B cell (primary cell): ENCODE measurements at regions of chr22 and their contacts with region 1.

Region 1: GRCh38 chr22:41857155-41857859 is 24.4 kb downstream of the SREBF2 start:
- DNase-seq: peak; percentile 75
- ATAC-seq: peak; percentile 25
- H3K4me3 ChIP-seq: no peak overlapping the region
- H3K4me3 Mint-ChIP-seq: peak overlapping the region; percentile 40
- H3K27ac ChIP-seq: peak overlapping the region; percentile 10 to 63
- H3K27ac Mint-ChIP-seq: peak overlapping the region; percentile 80
- H3K4me1 ChIP-seq: peaks cover 52 to 62% of the 10 kb centered on the region in 2 donors
- H3K4me1 Mint-ChIP-seq: peaks cover 67% of the 10 kb centered on the region
- H3K27me3 ChIP-seq: no peaks in the 10 kb centered on the region
- H3K27me3 Mint-ChIP-seq: no peaks in the 10 kb centered on the region
- CTCF ChIP-seq: peak; percentile 78

Region 2: DNA sequence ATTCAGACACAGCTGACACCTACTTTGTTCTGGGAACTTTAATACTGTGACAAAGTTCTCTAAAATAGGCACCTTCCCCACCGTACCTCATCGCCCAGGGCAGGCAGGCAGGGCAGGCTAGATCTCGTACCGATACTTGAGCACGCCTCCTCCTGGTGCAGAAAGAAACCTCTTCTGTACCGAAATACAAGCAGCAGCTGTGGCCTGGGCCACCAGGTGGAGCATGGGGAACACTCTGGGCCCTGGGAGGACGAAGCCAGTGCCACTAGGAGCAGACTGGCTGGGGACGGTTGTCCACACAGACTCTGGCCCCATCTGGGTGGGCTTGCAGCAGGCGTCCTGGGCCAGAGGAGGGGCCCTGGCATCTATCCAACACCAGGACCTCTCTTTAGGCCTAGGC is 280.4 kb before region 1 on chr22:
- CTCF ChIA-PET with region 1: no interaction called
- POLR2A ChIA-PET with region 1: no interaction called
- intact Hi-C with region 1: no loop called
- DNase-seq: peak; percentile 33
- ATAC-seq: peak; percentile 41
- H3K4me3 ChIP-seq: no peak overlapping the region
- H3K4me3 Mint-ChIP-seq: no peak overlapping the region
- H3K27ac ChIP-seq: no peak overlapping the region
- H3K27ac Mint-ChIP-seq: no peak overlapping the region
- H3K4me1 ChIP-seq: no peaks in the 10 kb centered on the region
- H3K4me1 Mint-ChIP-seq: no peaks in the 10 kb centered on the region
- H3K27me3 ChIP-seq: no peaks in the 10 kb centered on the region
- H3K27me3 Mint-ChIP-seq: no peaks in the 10 kb centered on the region
- CTCF ChIP-seq: no peak

Region 3: DNA sequence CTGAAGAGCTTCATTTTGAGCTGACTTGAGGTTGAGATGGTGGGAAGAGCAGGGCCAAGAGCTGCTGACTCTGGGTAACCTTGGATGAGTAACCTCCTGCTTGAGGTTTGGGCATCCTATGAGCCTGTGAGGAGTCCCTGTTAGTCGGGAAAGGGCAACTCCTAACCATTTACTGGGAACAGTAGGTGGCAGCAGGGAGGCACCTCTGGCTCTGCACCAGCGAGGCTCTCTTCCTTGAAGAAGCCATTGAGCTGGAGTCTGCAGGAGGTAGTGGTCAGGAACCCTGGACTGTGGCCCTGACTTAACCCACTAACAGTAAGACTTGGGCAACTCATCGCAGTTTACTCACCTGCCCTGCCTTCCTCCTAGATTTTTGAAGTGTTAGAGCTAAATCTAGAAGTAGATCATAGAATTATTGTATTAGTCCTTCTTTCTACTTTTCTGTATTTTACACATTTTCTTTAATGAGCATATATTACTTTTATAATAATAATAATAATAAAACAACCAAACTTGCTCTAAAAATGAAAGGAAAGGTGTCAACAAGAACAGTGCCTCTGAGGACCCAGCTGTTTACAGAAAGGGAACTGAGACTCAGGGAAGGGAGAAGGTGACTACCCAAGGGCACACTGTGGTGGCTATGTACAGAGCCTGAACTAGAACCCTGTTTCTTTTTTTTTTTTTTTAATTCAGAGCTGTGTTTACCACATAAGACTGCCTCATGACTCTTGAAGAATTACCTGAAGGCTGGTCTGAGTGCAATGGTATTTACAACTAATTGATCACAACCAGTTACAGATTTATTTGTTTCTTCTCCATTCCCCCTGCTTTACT is 110.5 kb before region 1 on chr22:
- CTCF ChIA-PET with region 1: interaction called, 9 read pairs
- POLR2A ChIA-PET with region 1: interaction called, 11 read pairs
- intact Hi-C with region 1: no loop called
- DNase-seq: peak; percentile 73
- ATAC-seq: peak; percentile 96
- H3K4me3 ChIP-seq: peak overlapping the region in 1 of 5 experiments; percentile 26
- H3K4me3 Mint-ChIP-seq: peak overlapping the region; percentile 63
- H3K27ac ChIP-seq: peak overlapping the region; percentile 50 to 62
- H3K27ac Mint-ChIP-seq: peak overlapping the region; percentile 80
- H3K4me1 ChIP-seq: peaks cover 30 to 32% of the 10 kb centered on the region in 2 donors
- H3K4me1 Mint-ChIP-seq: peaks cover 32% of the 10 kb centered on the region
- H3K27me3 ChIP-seq: no peaks in the 10 kb centered on the region
- H3K27me3 Mint-ChIP-seq: no peaks in the 10 kb centered on the region
- CTCF ChIP-seq: peak; percentile 40

Region 4: GRCh38 chr22:41842996-41843970 is 14.0 kb before region 1 on chr22:
- CTCF ChIA-PET with region 1: interaction called, 10 read pairs
- POLR2A ChIA-PET with region 1: interaction called, 8 read pairs
- intact Hi-C with region 1: loop called (anchors 2 kb)
- DNase-seq: no peak
- ATAC-seq: no peak
- H3K4me3 ChIP-seq: no peak overlapping the region
- H3K4me3 Mint-ChIP-seq: peak overlapping the region; percentile 21
- H3K27ac ChIP-seq: peak overlapping the region; percentile 30 to 39
- H3K27ac Mint-ChIP-seq: peak overlapping the region; percentile 34
- H3K4me1 ChIP-seq: peaks cover 51 to 65% of the 10 kb centered on the region in 2 donors
- H3K4me1 Mint-ChIP-seq: peaks cover 83% of the 10 kb centered on the region
- H3K27me3 ChIP-seq: no peaks in the 10 kb centered on the region
- H3K27me3 Mint-ChIP-seq: no peaks in the 10 kb centered on the region
- CTCF ChIP-seq: no peak

Region 5: DNA sequence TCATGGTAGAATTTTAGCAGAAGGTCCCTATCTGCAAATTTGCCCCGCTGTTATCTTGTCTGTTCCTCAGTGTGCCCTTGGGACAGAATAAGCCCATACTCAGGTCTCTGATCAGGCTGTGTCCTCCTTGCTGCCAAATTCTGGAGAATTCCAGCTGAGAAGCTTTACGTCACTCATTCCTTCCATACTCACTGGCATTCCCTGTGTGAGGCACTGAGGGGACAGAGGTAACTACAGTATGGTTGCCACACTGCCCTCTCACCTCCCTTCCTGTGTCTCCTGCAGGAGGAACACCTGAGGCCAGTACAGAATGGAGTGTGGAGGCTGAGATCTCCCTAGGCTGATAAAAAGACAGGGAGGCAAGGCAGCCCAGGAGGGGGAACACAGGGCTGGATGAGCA is 26.1 kb after region 1 on chr22:
- CTCF ChIA-PET with region 1: interaction called, 13 read pairs
- POLR2A ChIA-PET with region 1: interaction called, 4 read pairs
- intact Hi-C with region 1: loop called (anchors 2 kb)
- DNase-seq: no peak
- ATAC-seq: no peak
- H3K4me3 ChIP-seq: no peak overlapping the region
- H3K4me3 Mint-ChIP-seq: peak overlapping the region; percentile 44
- H3K27ac ChIP-seq: peak overlapping the region; percentile 52 to 71
- H3K27ac Mint-ChIP-seq: peak overlapping the region; percentile 93
- H3K4me1 ChIP-seq: peaks cover 23 to 39% of the 10 kb centered on the region in 2 donors
- H3K4me1 Mint-ChIP-seq: peaks cover 71% of the 10 kb centered on the region
- H3K27me3 ChIP-seq: no peaks in the 10 kb centered on the region
- H3K27me3 Mint-ChIP-seq: no peaks in the 10 kb centered on the region
- CTCF ChIP-seq: no peak

Region 6: GRCh38 chr22:41910050-41911000 is 53.0 kb after region 1 on chr22:
- CTCF ChIA-PET with region 1: interaction called, 3 read pairs
- POLR2A ChIA-PET with region 1: interaction called, 11 read pairs
- intact Hi-C with region 1: no loop called
- DNase-seq: peak; percentile 73
- ATAC-seq: peak; percentile 10
- H3K4me3 ChIP-seq: peak overlapping the region in 4 of 5 experiments; percentile 35 to 57 (median 50)
- H3K4me3 Mint-ChIP-seq: peak overlapping the region; percentile 83
- H3K27ac ChIP-seq: no peak overlapping the region
- H3K27ac Mint-ChIP-seq: peak overlapping the region; percentile 67
- H3K4me1 ChIP-seq: peaks cover 61% of the 10 kb centered on the region in 2 donors
- H3K4me1 Mint-ChIP-seq: peaks cover 51% of the 10 kb centered on the region
- H3K27me3 ChIP-seq: peaks cover 0 to 44% (median 21%) of the 10 kb centered on the region in 4 experiments
- H3K27me3 Mint-ChIP-seq: peaks cover 9% of the 10 kb centered on the region
- CTCF ChIP-seq: no peak